Caco-2 (cell line): ENCODE measurements at regions of chr17 and their contacts with region 1.

Region 1: GRCh38 chr17:82457997-82458864 is at the start of gene NARF:
- DNase-seq: peak; percentile 99 to 100
- H3K4me3 ChIP-seq: peak within 1 kb of the TSS; percentile 76
- H3K4me3 Mint-ChIP-seq: peak within 1 kb of the TSS; percentile 87
- H3K27ac Mint-ChIP-seq: peak within 1 kb of the TSS; percentile 80
- H3K4me1 ChIP-seq: peaks cover 22% of the 10 kb centered on the region
- H3K4me1 Mint-ChIP-seq: peaks cover 22% of the 10 kb centered on the region
- H3K27me3 ChIP-seq: no peaks in the 10 kb centered on the region
- H3K27me3 Mint-ChIP-seq: no peaks in the 10 kb centered on the region
- CTCF ChIP-seq: no peak
- total RNA-seq, gene NARF: 62.1 and 66.1 TPM in 2 replicates

Region 2: DNA sequence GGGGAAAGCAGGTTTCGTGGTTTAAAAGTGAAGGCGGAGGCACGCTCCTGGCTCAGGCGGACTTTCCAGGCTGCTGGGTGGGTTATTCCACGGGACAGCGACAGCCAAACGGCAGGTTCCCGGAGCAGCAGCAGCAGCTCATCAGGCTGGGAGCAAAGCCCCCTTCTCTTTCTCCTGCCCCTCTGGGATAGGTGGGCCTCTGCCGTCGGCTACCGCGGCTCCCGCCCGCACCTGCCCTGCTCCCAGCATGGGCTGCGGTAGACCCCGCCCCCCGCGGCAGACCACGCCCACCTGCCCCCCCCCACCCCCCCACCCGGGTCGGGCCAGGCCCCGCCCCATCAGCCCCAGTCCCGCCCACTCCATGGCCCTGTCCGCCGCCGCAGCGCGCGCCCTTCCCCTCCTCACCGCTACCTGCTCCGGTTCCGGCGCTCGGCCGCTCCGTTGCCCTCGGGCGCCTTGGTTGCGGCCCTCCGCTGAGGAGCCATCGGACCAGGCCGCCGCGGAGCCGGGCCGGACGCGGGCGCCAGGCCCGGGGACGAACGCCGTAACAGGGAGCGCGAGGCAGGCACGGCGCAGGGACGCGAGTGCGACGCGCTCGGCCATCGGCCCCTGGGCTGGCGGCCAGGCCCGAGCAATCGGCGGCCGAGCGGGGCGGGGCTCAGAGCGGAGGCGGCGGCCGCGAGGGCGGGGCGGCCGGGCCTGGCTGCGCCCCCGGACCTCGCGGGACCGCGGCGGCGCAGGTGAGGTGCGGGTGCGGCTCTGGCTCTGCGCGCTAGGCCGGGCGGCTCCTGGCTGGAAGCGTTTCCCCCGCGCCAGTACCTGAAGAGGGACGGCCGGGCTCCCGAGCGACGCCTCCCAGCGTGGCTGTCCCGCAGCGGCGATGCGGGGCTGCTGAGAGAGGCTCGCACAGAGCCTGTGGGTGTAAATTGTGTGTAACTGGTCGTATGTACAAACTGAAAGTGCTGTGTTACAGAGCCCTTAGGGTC is 39.9 kb before region 1 on chr17 and contains the starts of genes HEXD and OGFOD3:
- CTCF ChIA-PET with region 1: no interaction called
- POLR2A ChIA-PET with region 1: no interaction called
- intact Hi-C with region 1: loop called (anchors 2 kb)
- DNase-seq: peak; percentile 83 to 94
- H3K4me3 ChIP-seq: peak within 1 kb of the TSS; percentile 95
- H3K4me3 Mint-ChIP-seq: peak within 1 kb of the TSS; percentile 80
- H3K27ac Mint-ChIP-seq: no peak within 1 kb of the TSS
- H3K4me1 ChIP-seq: 0 out of 2 replicates have a peak, but pooled peaks cover 3% of the 10 kb centered on the region
- H3K4me1 Mint-ChIP-seq: no peaks in the 10 kb centered on the region
- H3K27me3 ChIP-seq: no peaks in the 10 kb centered on the region
- H3K27me3 Mint-ChIP-seq: no peaks in the 10 kb centered on the region
- CTCF ChIP-seq: no peak
- total RNA-seq, gene HEXD: 29.5 and 34.2 TPM in 2 replicates
- total RNA-seq, gene OGFOD3: 47.2 and 51.2 TPM in 2 replicates

Region 3: GRCh38 chr17:82429824-82430223 is 28.4 kb before region 1 on chr17:
- CTCF ChIA-PET with region 1: no interaction called
- POLR2A ChIA-PET with region 1: no interaction called
- intact Hi-C with region 1: no loop called
- DNase-seq: no peak
- H3K4me3 ChIP-seq: no peak overlapping the region
- H3K4me3 Mint-ChIP-seq: no peak overlapping the region
- H3K27ac Mint-ChIP-seq: peak overlapping the region; percentile 29
- H3K4me1 ChIP-seq: no peaks in the 10 kb centered on the region
- H3K4me1 Mint-ChIP-seq: no peaks in the 10 kb centered on the region
- H3K27me3 ChIP-seq: no peaks in the 10 kb centered on the region
- H3K27me3 Mint-ChIP-seq: no peaks in the 10 kb centered on the region
- CTCF ChIP-seq: no peak

Region 4: GRCh38 chr17:82494236-82495055 is 36.2 kb after region 1 on chr17:
- CTCF ChIA-PET with region 1: no interaction called
- POLR2A ChIA-PET with region 1: no interaction called
- intact Hi-C with region 1: loop called (anchors 1 kb)
- DNase-seq: peak; percentile 90 to 94
- H3K4me3 ChIP-seq: no peak overlapping the region
- H3K4me3 Mint-ChIP-seq: peak overlapping the region; percentile 67
- H3K27ac Mint-ChIP-seq: peak overlapping the region; percentile 93
- H3K4me1 ChIP-seq: peaks cover 19% of the 10 kb centered on the region
- H3K4me1 Mint-ChIP-seq: peaks cover 12% of the 10 kb centered on the region
- H3K27me3 ChIP-seq: no peaks in the 10 kb centered on the region
- H3K27me3 Mint-ChIP-seq: peaks cover 4% of the 10 kb centered on the region
- CTCF ChIP-seq: peak; percentile 86 to 97

Region 5: DNA sequence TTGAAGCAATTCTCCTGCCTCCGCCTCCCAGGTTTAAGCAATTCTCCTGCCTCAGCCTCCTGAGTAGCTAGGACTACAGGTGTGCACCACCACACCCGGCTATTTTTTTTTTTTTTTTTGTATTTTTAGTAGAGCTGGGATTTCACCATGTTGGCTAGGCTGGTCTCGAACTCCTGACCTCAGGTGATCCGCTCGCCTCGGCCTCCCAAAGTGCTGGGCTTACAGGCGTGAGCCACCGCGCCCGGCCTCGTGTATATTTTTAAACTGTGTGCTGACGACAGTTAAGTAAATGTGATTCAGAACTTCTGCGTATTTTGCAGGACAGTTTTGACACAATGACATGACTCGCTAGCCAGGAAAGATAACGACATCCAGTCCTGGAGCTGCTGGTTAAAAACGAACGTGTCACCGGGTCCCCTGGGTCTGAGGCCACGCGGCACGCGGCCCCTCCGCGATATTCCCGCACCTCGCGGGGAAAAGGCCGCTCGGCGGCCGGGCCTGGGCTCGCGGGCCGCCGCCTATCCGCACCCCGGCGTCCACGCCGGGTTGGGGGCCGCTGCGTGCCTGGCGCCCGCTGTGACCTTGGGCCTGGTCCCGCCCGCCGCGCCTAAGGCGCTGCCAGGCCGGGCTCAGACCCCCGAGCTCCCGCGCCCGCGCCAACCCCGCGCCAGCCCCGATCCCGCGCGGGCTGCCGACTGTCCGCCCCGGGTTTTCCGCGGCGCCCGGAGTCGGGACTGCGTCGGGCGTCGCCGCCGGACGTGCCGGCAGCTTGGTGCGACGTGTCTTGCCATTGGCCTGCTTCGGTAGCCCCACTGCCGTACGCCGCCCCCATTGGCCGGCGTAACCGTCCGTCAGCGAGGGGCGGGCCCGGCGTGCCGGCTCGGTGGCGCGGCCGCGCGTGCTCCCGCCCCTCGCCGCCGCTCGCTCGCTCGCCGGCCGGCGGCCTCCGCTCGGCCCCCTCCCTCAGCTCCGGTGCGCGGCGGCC is 60.9 kb after region 1 on chr17 and contains the start of gene FOXK2:
- CTCF ChIA-PET with region 1: no interaction called
- POLR2A ChIA-PET with region 1: no interaction called
- intact Hi-C with region 1: loop called (anchors 2 kb)
- DNase-seq: peak; percentile 96 to 99
- H3K4me3 ChIP-seq: peak within 1 kb of the TSS; percentile 93
- H3K4me3 Mint-ChIP-seq: peak within 1 kb of the TSS; percentile 97
- H3K27ac Mint-ChIP-seq: peak within 1 kb of the TSS; percentile 94
- H3K4me1 ChIP-seq: peaks cover 20% of the 10 kb centered on the region
- H3K4me1 Mint-ChIP-seq: peaks cover 17% of the 10 kb centered on the region
- H3K27me3 ChIP-seq: no peaks in the 10 kb centered on the region
- H3K27me3 Mint-ChIP-seq: no peaks in the 10 kb centered on the region
- CTCF ChIP-seq: no peak
- total RNA-seq, gene FOXK2: 118 and 124 TPM in 2 replicates